ENCODE measurements at regions of chrX and their contacts with region 1.

Region 1: GRCh38 chrX:69277369-69277990 is 112.2 kb upstream of the PJA1 start:
- DNase-seq: no peak
- H3K4me3 ChIP-seq: no peak overlapping the region
- CTCF ChIP-seq: no peak
- POLR2A ChIP-seq: no peak

Region 2: GRCh38 chrX:69234624-69235023 is 42.9 kb before region 1 on chrX:
- intact Hi-C with region 1: loop called (anchors 2 kb)
- DNase-seq: peak in 1 of 2 donors; percentile 18
- H3K4me3 ChIP-seq: no peak overlapping the region
- CTCF ChIP-seq: no peak
- POLR2A ChIP-seq: no peak

Measured in lower leg skin (tissue), 4 donors.